Activated CD4-positive, alpha-beta T cell treated with anti-CD3 and anti-CD28 coated beads for 36 hours (primary cell): ENCODE measurements at regions of chr13 and their contacts with region 1.

Region 1: GRCh38 chr13:27424246-27425157 is at the start of gene GTF3A:
- DNase-seq: peak; percentile 92
- ATAC-seq: peak; percentile 66
- H3K4me3 Mint-ChIP-seq: peak within 1 kb of the TSS; percentile 80
- H3K27ac Mint-ChIP-seq: peak within 1 kb of the TSS; percentile 97
- H3K4me1 Mint-ChIP-seq: peaks cover 45% of the 10 kb centered on the region
- H3K27me3 Mint-ChIP-seq: no peaks in the 10 kb centered on the region
- total RNA-seq, gene GTF3A: 177 to 208 TPM

Region 2: DNA sequence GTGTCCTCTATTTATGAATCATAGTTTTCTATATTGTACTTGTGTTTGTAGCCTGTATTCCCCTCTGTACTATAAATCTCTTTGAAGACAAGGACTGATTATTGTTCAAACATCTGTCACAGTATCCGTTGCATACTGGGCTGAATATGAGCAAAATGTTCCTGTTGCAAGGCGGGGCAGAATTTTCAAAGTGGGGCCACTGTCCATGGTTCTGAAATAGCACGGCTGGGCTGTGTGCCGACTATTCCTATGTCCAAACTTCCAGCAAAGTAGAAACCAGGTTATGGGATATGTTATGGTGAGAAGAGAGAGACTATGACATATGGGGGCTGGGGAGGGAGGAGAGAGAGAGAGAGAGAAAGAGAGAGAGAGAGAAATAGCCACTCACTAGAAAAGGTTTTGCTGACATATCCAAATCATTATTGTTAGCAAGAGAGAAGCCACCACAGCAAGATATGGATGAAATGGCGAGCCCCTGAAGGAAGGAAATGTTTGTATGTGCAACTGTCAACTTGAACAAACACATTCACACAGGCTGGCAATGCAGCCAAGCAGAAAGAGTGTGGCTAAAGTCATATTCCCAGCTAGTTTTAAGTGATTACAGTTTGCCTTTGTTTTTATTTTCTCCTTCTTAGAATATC is 556.9 kb before region 1 on chr13:
- CTCF ChIA-PET with region 1: no interaction called
- POLR2A ChIA-PET with region 1: no interaction called
- intact Hi-C with region 1: no loop called
- DNase-seq: peak; percentile 42
- ATAC-seq: no peak
- H3K4me3 Mint-ChIP-seq: no peak overlapping the region
- H3K27ac Mint-ChIP-seq: no peak overlapping the region
- H3K4me1 Mint-ChIP-seq: no peaks in the 10 kb centered on the region
- H3K27me3 Mint-ChIP-seq: peaks cover 9% of the 10 kb centered on the region

Region 3: GRCh38 chr13:27161980-27162379 is 262.5 kb before region 1 on chr13:
- CTCF ChIA-PET with region 1: no interaction called
- POLR2A ChIA-PET with region 1: no interaction called
- intact Hi-C with region 1: no loop called
- DNase-seq: no peak
- ATAC-seq: no peak
- H3K4me3 Mint-ChIP-seq: no peak overlapping the region
- H3K27ac Mint-ChIP-seq: no peak overlapping the region
- H3K4me1 Mint-ChIP-seq: peaks cover 64% of the 10 kb centered on the region
- H3K27me3 Mint-ChIP-seq: no peaks in the 10 kb centered on the region

Region 4: GRCh38 chr13:27389891-27390290 is 34.6 kb before region 1 on chr13:
- CTCF ChIA-PET with region 1: no interaction called
- POLR2A ChIA-PET with region 1: no interaction called
- intact Hi-C with region 1: no loop called
- DNase-seq: no peak
- ATAC-seq: no peak
- H3K4me3 Mint-ChIP-seq: no peak overlapping the region
- H3K27ac Mint-ChIP-seq: no peak overlapping the region
- H3K4me1 Mint-ChIP-seq: no peaks in the 10 kb centered on the region
- H3K27me3 Mint-ChIP-seq: no peaks in the 10 kb centered on the region

Region 5: GRCh38 chr13:27455331-27455855 is 30.9 kb after region 1 on chr13:
- CTCF ChIA-PET with region 1: interaction called, 23 read pairs
- POLR2A ChIA-PET with region 1: interaction called, 42 read pairs
- intact Hi-C with region 1: loop called (anchors 1 kb)
- DNase-seq: peak; percentile 40
- ATAC-seq: peak; percentile 59
- H3K4me3 Mint-ChIP-seq: peak overlapping the region; percentile 72
- H3K27ac Mint-ChIP-seq: peak overlapping the region; percentile 97
- H3K4me1 Mint-ChIP-seq: peaks cover 27% of the 10 kb centered on the region
- H3K27me3 Mint-ChIP-seq: no peaks in the 10 kb centered on the region

Region 6: DNA sequence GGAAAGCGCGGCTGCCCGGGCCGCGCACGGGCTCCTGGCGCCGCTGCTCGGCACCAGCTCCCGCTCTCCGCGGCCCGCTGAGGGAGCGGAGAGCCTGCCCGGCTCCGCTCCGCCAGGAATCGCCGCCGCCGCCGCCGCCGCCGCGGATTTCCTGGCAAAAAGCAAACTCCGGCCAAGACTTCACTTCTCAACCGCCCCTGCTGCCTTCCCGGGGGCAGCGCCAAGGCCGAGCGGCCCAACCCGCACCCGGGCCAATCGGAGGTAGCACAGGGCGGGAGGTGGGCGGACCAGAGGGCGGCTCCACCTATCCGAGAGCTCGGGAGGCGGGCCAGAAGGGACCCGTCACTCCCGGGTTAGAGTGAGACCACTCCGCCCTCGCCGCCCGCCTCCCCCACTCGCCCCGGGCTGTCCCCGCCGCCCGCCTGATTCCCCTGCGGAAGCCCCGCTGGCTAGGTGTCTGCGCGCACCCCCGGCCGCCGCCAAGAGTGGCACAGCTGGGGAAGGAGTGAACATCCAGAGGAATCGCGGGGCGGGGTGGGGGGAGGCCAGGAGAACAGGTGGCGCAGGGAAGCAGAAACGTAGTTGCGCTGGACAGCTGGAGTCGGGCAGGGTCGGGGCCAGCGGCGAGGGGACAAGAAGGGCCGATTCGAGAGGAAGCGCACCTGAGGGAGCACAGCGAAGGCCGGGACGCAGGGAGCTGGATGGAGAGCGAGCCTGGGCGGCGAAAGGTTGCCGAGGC is 196.0 kb after region 1 on chr13 and contains the start of gene LNX2:
- CTCF ChIA-PET with region 1: interaction called, 9 read pairs
- POLR2A ChIA-PET with region 1: interaction called, 4 read pairs
- intact Hi-C with region 1: loop called (anchors 1 kb)
- DNase-seq: peak; percentile 98
- ATAC-seq: peak; percentile 92
- H3K4me3 Mint-ChIP-seq: peak within 1 kb of the TSS; percentile 92
- H3K27ac Mint-ChIP-seq: peak within 1 kb of the TSS; percentile 91
- H3K4me1 Mint-ChIP-seq: peaks cover 51% of the 10 kb centered on the region
- H3K27me3 Mint-ChIP-seq: no peaks in the 10 kb centered on the region
- total RNA-seq, gene LNX2: 4.7 to 4.8 TPM